Gastrocnemius medialis (tissue), 4 donors: ENCODE measurements at regions of chr1 and their contacts with region 1.

Region 1: DNA sequence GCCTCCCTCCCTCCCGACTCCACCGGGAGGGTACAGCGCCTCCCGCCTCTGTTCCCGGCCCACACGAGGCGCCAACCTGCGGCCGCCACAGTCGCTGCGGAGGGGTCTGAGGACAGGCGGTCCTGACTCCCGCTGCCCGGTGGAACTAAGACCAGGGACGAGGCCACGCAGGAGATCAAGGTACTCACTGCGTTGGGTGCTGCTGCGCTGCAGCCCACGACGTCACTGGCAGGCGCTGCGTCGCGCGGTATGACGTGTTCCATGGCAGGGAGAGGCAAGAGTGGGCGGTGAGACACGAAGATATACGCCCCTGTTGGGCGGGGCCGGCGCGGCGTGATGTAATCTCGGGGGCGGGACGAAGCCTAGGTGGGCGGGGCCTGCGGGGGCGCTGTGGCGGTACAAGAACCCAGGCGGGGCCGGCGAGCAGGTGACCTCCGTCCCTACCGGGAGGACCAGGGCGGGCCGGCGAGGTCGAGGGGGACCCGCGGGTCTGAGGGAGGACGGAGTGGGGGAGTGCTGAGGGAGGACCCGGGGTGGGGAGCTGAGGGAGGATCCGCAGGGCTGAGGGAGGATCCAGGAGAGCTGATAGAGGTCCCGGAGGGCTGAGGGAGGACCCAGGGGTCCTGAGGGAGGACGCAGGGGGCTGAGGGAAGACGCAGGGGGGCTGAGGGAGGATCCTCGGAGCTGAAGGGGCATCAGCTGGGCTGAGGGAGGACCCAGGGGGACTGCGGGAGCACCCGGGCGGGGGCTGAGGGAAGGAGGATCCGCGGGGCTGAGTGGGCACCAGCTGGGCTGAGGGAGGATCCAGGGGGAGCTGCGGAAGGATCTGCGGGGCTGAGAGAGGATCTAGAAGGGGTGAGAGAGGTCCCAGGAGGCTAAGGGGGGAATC is at the start of gene MRPL55:
- DNase-seq: peak; percentile 95 to 98
- ATAC-seq: peak; percentile 96
- H3K4me3 ChIP-seq: peak within 1 kb of the TSS; percentile 73 to 100 (median 79)
- H3K27ac ChIP-seq: peak within 1 kb of the TSS; percentile 86 to 96 (median 92)
- H3K4me1 ChIP-seq: peaks cover 20% of the 10 kb centered on the region in 2 donors
- H3K27me3 ChIP-seq: no peaks in the 10 kb centered on the region
- CTCF ChIP-seq: peak in 3 of 5 experiments; percentile 14 to 34 (median 29)
- POLR2A ChIP-seq: peak; percentile 92 to 95
- total RNA-seq, gene MRPL55: 64.7 to 123 (median 74.2) TPM

Region 2: GRCh38 chr1:228139944-228140656 is 30.8 kb after region 1 on chr1 and contains the start of gene GUK1:
- in situ Hi-C with region 1: no loop called
- intact Hi-C with region 1: loop called (anchors 1 kb)
- DNase-seq: peak; percentile 100
- ATAC-seq: peak; percentile 89 to 90
- H3K4me3 ChIP-seq: peak within 1 kb of the TSS; percentile 83 to 100 (median 96)
- H3K27ac ChIP-seq: peak within 1 kb of the TSS; percentile 94 to 99 (median 96)
- H3K4me1 ChIP-seq: peaks cover 32 to 37% of the 10 kb centered on the region in 2 donors
- H3K27me3 ChIP-seq: no peaks in the 10 kb centered on the region
- CTCF ChIP-seq: peak in 3 of 5 experiments; percentile 7 to 39 (median 28)
- POLR2A ChIP-seq: peak; percentile 98 to 99
- total RNA-seq, gene GUK1: 161 to 230 (median 183) TPM

Region 3: GRCh38 chr1:228405987-228406265 is 296.6 kb after region 1 on chr1:
- in situ Hi-C with region 1: no loop called
- intact Hi-C with region 1: loop called (anchors 10 kb)
- DNase-seq: peak in 1 of 2 donors; percentile 10
- ATAC-seq: no peak
- H3K4me3 ChIP-seq: peak overlapping the region; percentile 63 to 86 (median 76)
- H3K27ac ChIP-seq: peak overlapping the region in 2 of 4 donors; percentile 73 to 77
- H3K4me1 ChIP-seq: peaks cover 12 to 19% of the 10 kb centered on the region in 2 donors
- H3K27me3 ChIP-seq: no peaks in the 10 kb centered on the region
- CTCF ChIP-seq: no peak
- POLR2A ChIP-seq: no peak

Region 4: DNA sequence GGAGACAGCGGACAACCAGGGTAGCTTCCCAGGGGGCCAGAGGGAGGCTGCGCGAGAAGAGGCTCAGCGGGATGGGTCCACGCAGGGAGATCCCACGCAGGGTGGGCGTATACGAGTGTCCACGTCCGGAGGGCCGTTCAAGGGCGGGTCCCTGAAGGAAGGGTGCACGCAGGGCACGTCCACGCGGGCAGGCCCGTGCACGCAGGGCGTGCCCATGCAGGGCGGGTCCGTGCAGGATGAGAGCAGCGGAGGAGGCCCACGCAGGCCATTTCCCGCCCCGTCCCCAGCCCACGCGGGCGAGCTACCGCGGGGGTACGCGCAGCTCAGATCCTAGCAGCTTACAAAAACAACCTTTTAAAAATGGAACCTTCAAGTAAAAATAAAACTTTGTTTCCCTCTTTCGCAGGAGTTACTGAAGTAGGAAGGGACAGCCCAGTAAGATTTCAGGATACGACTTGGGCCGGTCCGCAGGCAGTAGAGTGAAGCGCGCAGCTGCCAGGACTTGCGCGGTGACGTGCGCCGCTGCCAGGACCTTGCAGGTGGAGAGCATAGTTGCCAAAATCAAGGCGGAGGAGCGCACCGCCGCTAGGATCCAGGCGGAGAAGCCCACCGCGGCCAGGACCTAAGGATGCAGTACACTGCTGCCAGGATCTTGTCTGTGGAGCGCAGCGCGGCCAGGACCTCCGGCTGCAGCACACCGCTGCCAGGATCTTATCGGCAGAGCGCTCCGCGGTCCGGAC is 377.4 kb after region 1 on chr1:
- in situ Hi-C with region 1: no loop called
- intact Hi-C with region 1: loop called (anchors 10 kb)
- DNase-seq: peak; percentile 11 to 58
- ATAC-seq: peak; percentile 66 to 71
- H3K4me3 ChIP-seq: peak overlapping the region; percentile 77 to 99 (median 96)
- H3K27ac ChIP-seq: peak overlapping the region; percentile 92 to 97 (median 96)
- H3K4me1 ChIP-seq: peaks cover 38 to 39% of the 10 kb centered on the region in 2 donors
- H3K27me3 ChIP-seq: no peaks in the 10 kb centered on the region
- CTCF ChIP-seq: peak in 2 of 5 experiments; percentile 43 to 55
- POLR2A ChIP-seq: no peak